ENCODE measurements at regions of chr18 and their contacts with region 1.

Region 1: DNA sequence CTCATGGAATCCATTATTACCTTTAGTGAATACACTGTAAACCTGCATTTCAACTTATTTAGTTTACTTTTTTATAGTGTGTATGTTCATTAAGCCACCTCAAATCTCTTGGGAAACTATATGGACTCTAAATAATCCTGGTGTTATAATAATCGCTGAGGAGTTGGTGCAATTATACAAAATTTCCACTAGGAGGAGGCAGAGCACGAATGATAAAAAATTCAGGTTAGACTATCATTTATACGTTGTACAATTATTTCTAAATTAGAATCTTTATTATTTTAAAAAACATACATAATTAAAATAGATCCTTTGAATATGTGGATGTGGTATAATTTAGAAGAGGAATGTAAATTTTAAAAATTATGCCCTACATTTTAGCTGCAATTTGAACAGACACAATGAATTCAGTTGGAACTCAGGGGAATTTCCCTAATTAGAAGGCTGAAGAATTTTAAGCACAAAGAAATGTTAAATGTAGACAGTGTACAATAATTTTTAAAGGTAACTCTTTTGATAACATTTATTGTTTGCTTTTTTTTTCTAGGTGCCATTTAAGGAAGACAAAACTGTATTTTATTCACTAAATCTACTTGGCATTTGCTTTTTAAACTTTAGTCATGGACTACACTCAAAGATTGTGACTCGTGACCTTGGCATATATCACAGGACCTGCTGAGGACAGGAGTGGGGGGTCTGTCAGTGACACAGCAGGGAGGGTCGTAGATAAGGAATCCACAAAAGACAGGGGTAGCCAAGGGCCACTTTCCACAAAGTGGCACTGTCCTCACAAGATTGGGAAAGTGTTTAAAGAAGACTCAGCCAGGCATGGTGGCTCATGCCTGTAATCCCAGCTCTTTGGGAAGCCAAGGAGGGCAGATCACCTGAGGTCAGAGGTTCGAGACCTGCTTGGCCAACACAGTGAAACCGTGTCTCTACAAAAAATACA is 45.5 kb downstream of the RAB12 start:
- DNase-seq: peak; percentile 50
- H3K4me3 ChIP-seq: no peak overlapping the region
- H3K27ac ChIP-seq: no peak overlapping the region
- H3K4me1 ChIP-seq: no peaks in the 10 kb centered on the region; the same call in 1 of the 2 replicates
- H3K27me3 ChIP-seq: no peaks in the 10 kb centered on the region

Region 2: DNA sequence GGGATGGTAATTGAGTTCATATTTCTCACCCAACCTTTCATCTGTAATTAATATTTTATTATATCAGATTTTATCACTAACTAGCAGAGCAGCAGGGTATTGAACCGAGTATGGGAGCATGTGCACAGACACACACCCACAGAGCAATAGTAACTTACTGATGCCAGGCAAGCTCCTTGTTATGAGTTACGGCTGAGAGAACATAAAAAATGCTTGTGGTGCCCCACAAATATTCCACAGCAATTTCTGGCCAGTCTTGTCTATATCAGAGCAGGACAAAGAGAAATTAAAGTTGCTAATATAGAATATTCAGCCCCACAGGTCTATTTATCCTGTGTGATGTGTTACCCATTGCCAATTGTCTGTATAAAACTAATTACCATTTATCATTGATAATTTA is 547.4 kb before region 1 on chr18:
- in situ Hi-C with region 1: no loop called
- DNase-seq: no peak
- H3K4me3 ChIP-seq: no peak overlapping the region
- H3K27ac ChIP-seq: no peak overlapping the region
- H3K4me1 ChIP-seq: no peaks in the 10 kb centered on the region
- H3K27me3 ChIP-seq: no peaks in the 10 kb centered on the region

Region 3: DNA sequence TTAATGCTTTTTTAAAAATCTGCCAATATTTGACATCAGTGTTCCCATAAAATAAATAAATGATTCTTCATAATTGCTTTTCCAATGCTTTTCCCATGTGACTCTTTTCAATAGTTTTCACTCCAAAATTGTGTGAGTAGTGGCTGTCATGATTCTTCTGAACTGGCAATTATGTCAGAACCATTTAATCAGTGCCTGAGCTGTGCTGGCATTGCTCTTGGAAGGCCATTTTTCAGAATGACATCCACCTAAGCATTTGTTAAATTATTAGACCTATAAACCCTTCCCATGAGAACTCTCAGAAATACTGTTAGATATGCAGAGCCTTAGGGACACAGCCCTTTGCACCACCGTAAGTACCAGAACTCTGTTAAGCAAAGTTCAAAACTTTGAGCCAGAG is 380.4 kb before region 1 on chr18:
- in situ Hi-C with region 1: no loop called
- DNase-seq: no peak
- H3K4me3 ChIP-seq: no peak overlapping the region
- H3K27ac ChIP-seq: no peak overlapping the region
- H3K4me1 ChIP-seq: no peaks in the 10 kb centered on the region
- H3K27me3 ChIP-seq: no peaks in the 10 kb centered on the region

Region 4: DNA sequence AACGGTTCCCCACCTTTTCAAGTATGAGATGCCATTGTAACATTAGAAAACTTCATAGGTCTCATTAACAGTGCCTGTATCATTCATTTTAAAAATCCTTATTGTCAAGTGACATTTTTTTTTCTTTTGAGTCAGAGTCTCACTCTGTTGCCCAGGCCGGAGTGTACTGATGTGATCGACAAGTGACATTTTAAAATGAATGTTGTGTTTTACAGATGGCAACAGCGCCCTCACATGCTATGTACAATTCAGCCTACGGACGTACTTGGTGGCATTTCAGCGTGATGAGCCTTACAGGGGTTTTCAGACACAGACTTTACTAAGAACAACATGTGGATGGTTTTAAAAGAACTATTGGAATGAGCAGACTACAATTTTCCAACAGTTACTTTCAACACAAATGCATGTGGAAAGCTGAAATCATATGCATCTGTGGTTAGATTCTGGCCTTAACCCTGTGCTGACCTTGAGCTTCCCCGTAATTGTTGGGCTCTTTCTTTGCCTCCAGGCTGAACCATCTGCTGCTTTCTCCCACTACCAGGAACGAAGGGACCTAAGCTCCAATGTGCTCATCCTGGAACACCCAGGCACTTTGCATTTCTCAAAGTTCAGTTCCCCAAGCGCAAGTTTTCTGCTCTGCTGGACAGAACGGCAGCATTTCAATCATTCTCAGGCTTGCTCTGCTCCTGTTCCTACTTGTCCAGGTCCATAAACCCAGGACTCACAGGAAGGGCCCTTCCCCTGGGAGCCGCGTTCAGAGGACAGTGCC is 327.8 kb after region 1 on chr18:
- in situ Hi-C with region 1: loop called (anchors 5 kb)
- DNase-seq: peak; percentile 81
- H3K4me3 ChIP-seq: no peak overlapping the region
- H3K27ac ChIP-seq: peak overlapping the region; percentile 17
- H3K4me1 ChIP-seq: peaks cover 30% of the 10 kb centered on the region
- H3K27me3 ChIP-seq: no peaks in the 10 kb centered on the region

Region 5: DNA sequence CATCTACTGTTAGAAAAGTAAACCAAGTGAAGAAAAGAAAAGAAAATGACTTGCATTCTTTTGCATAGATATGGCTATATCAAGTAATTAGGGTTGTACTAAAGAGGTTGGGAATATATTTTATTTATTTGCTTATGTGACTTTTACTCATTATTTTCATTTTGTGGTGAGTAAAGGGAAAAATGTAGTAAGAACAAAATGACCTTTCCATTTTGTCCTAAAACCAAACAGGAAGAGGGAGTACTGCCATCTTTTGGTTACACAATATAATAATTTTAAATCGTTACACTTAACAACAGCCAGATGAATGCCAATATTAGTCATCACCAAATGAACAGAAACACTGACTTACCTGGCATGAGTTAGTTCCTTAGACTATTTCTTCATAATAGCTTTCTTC is 400.4 kb after region 1 on chr18:
- in situ Hi-C with region 1: loop called (anchors 10 kb)
- DNase-seq: peak; percentile 88
- H3K4me3 ChIP-seq: no peak overlapping the region
- H3K27ac ChIP-seq: peak overlapping the region; percentile 52
- H3K4me1 ChIP-seq: peaks cover 8% of the 10 kb centered on the region
- H3K27me3 ChIP-seq: no peaks in the 10 kb centered on the region